Calu3 (cell line): ENCODE measurements at regions of chr12 and their contacts with region 1.

Region 1: DNA sequence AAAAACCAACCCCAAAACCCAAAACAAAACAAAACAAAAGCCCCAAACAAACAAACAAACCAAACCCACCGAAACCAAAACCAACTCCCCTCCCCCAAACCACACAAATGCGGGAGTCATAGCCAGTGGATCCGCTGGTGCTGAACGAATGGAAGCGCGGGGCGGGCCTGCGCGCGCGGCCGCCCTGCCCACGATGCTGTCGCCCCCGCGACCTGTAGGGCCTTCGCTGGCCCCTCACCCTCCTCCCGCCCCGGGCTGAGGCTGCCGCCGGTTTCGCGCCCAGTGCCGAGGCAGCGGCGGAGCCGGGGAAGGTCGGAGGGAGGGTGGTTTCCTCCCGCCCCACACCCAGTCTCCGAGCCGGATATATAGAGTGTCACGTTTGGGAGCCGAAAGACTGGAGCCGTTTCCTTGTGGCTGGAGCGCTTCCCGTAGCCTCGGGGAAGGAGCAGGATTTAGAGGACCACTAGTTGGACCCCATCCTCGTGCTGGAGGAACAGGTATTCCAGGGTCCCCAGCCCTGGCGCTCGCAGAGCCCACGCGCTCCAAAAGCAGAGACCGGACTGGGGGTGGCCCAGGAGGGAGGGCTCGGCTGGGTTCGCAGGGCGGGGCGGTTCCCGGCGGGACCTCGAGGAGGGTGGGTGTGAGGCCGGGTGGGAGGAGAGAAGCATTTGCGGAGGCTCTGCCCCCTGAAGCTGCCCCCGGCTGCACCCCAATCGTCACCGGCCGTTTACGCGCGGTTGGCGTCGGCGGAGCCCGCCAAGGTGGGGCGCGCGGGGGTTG is at the start of gene FAR2:
- DNase-seq: peak; percentile 76
- H3K4me3 Mint-ChIP-seq: peak within 1 kb of the TSS; percentile 98
- H3K27ac Mint-ChIP-seq: peak within 1 kb of the TSS; percentile 99
- H3K4me1 Mint-ChIP-seq: peaks cover 12% of the 10 kb centered on the region
- H3K27me3 Mint-ChIP-seq: no peaks in the 10 kb centered on the region
- CTCF ChIP-seq: no peak
- total RNA-seq, gene FAR2: 20.8 and 24.0 TPM in 2 replicates

Region 2: GRCh38 chr12:29187756-29188155 is 38.7 kb after region 1 on chr12:
- CTCF ChIA-PET with region 1: no interaction called
- intact Hi-C with region 1: loop called (anchors 2 kb)
- DNase-seq: no peak
- H3K4me3 Mint-ChIP-seq: no peak overlapping the region
- H3K27ac Mint-ChIP-seq: no peak overlapping the region
- H3K4me1 Mint-ChIP-seq: peaks cover 10% of the 10 kb centered on the region
- H3K27me3 Mint-ChIP-seq: no peaks in the 10 kb centered on the region
- CTCF ChIP-seq: no peak

Region 3: DNA sequence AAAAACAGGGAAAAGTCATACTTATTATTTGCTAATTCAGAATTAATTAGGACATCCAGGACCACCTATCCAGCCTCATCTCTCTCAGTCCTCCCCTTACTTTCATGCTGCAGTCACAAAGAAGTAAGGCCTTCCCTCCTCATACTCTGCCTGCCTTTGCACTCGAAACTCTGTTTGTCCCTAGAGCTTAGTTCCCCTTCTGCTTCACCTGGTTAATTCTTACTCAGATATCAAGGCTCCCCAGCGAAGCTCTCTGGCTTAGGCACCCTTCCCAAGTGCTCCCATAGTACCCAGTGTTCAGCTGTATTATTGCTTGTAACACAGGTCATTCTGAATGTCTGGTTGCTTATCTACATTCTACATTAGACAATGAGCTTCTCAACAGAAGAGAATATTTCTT is 150.5 kb after region 1 on chr12:
- CTCF ChIA-PET with region 1: no interaction called
- intact Hi-C with region 1: no loop called
- DNase-seq: no peak
- H3K4me3 Mint-ChIP-seq: no peak overlapping the region
- H3K27ac Mint-ChIP-seq: no peak overlapping the region
- H3K4me1 Mint-ChIP-seq: no peaks in the 10 kb centered on the region
- H3K27me3 Mint-ChIP-seq: no peaks in the 10 kb centered on the region
- CTCF ChIP-seq: no peak